Activated CD4-positive, alpha-beta memory T cell treated with anti-CD3 and anti-CD28 coated beads, Interleukin-2, amount 10 ng/mL, durations not matched to agents 7 days and 5 days (primary cell): ENCODE measurements at regions of chrX and their contacts with region 1.

Region 1: GRCh38 chrX:23782863-23783568 is at the start of gene SAT1:
- DNase-seq: peak; percentile 95
- H3K4me3 Mint-ChIP-seq: peak within 1 kb of the TSS; percentile 90
- H3K27ac Mint-ChIP-seq: peak within 1 kb of the TSS; percentile 97
- H3K4me1 Mint-ChIP-seq: peaks cover 33% of the 10 kb centered on the region
- H3K27me3 Mint-ChIP-seq: no peaks in the 10 kb centered on the region
- total RNA-seq, gene SAT1: 205 to 218 TPM

Region 2: GRCh38 chrX:23667239-23668177 is 115.5 kb before region 1 on chrX and contains the start of gene PRDX4:
- CTCF ChIA-PET with region 1: interaction called, 3 read pairs
- POLR2A ChIA-PET with region 1: interaction called, 17 read pairs
- DNase-seq: peak; percentile 79
- H3K4me3 Mint-ChIP-seq: peak within 1 kb of the TSS; percentile 82
- H3K27ac Mint-ChIP-seq: peak within 1 kb of the TSS; percentile 85
- H3K4me1 Mint-ChIP-seq: peaks cover 35% of the 10 kb centered on the region
- H3K27me3 Mint-ChIP-seq: no peaks in the 10 kb centered on the region
- total RNA-seq, gene PRDX4: 34.8 to 35.0 TPM

Region 3: GRCh38 chrX:23742697-23743622 is 40.1 kb before region 1 on chrX and contains the start of gene ACOT9:
- CTCF ChIA-PET with region 1: interaction called, 8 read pairs
- POLR2A ChIA-PET with region 1: interaction called, 44 read pairs
- DNase-seq: peak; percentile 80
- H3K4me3 Mint-ChIP-seq: peak within 1 kb of the TSS; percentile 84
- H3K27ac Mint-ChIP-seq: peak within 1 kb of the TSS; percentile 79
- H3K4me1 Mint-ChIP-seq: peaks cover 41% of the 10 kb centered on the region
- H3K27me3 Mint-ChIP-seq: no peaks in the 10 kb centered on the region
- total RNA-seq, gene ACOT9: 37.3 to 39.5 TPM

Region 4: DNA sequence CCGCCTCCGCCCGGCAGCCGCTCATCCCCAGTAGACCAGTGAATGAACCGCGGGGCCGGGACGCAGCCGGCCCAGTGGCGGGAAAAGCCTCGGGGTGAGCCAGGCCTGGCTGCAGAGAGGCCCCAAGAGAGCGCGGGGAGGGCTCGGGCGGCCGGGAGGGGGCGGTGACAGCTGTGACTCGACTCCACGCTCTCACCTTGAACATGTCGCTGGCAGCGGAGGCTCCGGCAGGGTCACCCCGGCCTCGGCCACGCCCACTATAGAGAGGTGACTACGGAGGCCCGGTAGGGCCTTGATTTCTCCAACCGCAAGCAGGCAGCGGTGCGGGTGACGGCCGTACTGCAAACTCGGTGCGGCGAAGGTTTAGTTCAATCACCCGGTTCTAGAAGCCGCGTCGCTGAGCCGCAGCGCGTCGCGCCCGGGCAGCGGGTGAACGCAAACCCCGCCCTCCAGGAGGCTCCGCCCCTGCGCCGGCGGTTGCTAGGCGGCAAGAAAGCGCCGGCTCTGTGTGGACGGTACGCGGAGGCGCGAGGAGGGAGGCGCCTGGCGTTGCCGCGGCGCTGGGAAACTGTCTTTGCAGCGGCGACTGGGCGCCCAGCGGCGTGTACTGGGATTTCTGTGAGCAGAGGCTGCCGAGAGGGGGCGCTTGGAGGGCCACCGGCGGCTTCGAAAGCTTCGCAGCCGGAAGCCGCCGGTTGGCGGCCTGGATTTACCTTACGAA is 124.6 kb after region 1 on chrX and contains the starts of genes APOO and CXorf58:
- CTCF ChIA-PET with region 1: interaction called, 80 read pairs
- POLR2A ChIA-PET with region 1: interaction called, 44 read pairs
- DNase-seq: peak; percentile 93
- H3K4me3 Mint-ChIP-seq: peak within 1 kb of the TSS; percentile 77
- H3K27ac Mint-ChIP-seq: peak within 1 kb of the TSS; percentile 89
- H3K4me1 Mint-ChIP-seq: peaks cover 23% of the 10 kb centered on the region
- H3K27me3 Mint-ChIP-seq: no peaks in the 10 kb centered on the region
- total RNA-seq, gene APOO: 25.1 to 26.3 TPM
- total RNA-seq, gene CXorf58: not detected

Region 5: DNA sequence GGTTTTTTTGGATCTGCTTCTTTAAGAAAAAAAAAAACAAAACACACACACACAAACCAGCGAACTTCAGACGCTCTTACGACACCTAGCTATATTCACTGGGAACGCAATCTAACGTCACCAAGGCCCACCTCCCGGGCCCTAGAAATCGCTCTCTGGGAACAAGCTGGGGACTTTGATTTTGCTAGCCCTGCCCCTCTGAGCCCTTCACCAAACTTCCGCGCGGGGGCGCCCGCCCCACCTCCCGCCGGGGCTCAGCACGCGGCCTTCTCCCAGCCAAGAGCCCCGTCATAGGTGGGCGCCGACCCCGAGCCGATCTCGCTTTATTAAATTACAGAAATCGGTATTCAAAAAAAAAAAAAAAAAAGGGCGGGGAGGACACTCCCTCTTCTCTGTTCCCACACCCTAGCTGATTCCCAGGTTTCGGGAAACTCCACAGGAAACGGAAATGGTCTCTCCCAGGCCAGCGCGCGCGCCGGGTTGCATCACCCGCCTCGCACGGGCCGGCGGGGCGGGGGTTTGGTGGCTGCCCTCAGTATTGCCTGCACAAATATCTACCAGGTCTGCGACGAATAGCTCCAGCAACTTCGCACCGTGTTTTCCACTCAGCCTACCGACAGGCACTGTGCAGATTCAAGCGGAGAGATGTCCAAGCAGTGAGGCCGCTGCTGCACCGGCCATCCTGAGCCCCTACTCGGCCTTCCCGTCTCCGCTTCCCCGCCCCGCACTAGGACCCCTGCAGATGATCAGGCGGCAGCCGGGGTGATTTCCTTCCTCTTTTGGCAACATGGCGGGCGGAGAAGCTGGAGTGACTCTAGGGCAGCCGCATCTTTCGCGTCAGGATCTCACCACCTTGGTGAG is 271.4 kb after region 1 on chrX and contains the start of gene EIF2S3:
- CTCF ChIA-PET with region 1: interaction called, 29 read pairs
- POLR2A ChIA-PET with region 1: interaction called, 19 read pairs
- DNase-seq: peak; percentile 86
- H3K4me3 Mint-ChIP-seq: no peak within 1 kb of the TSS
- H3K27ac Mint-ChIP-seq: peak within 1 kb of the TSS; percentile 97
- H3K4me1 Mint-ChIP-seq: peaks cover 11% of the 10 kb centered on the region
- H3K27me3 Mint-ChIP-seq: no peaks in the 10 kb centered on the region
- total RNA-seq, gene EIF2S3: 172 to 179 TPM